ENCODE measurements at regions of chr15 and their contacts with region 1.

Region 1: GRCh38 chr15:29756358-29757267 is 65.7 kb downstream of the TJP1 start:
- DNase-seq: no peak
- ATAC-seq: no peak
- H3K4me3 ChIP-seq: no peak overlapping the region
- H3K4me3 Mint-ChIP-seq: no peak overlapping the region
- H3K27ac ChIP-seq: no peak overlapping the region
- H3K27ac Mint-ChIP-seq: no peak overlapping the region
- H3K4me1 ChIP-seq: no peaks in the 10 kb centered on the region
- H3K4me1 Mint-ChIP-seq: no peaks in the 10 kb centered on the region
- H3K27me3 ChIP-seq: no peaks in the 10 kb centered on the region
- H3K27me3 Mint-ChIP-seq: peaks cover 17% of the 10 kb centered on the region
- CTCF ChIP-seq: no peak

Region 2: GRCh38 chr15:29925227-29926082 is 168.8 kb after region 1 on chr15:
- CTCF ChIA-PET with region 1: no interaction called
- POLR2A ChIA-PET with region 1: no interaction called
- intact Hi-C with region 1: loop called in 1 of 2 experiments (anchors 5 kb)
- DNase-seq: peak in 4 of 9 experiments; percentile 12 to 42 (median 18)
- ATAC-seq: no peak
- H3K4me3 ChIP-seq: no peak overlapping the region
- H3K4me3 Mint-ChIP-seq: no peak overlapping the region
- H3K27ac ChIP-seq: no peak overlapping the region
- H3K27ac Mint-ChIP-seq: no peak overlapping the region
- H3K4me1 ChIP-seq: no peaks in the 10 kb centered on the region
- H3K4me1 Mint-ChIP-seq: no peaks in the 10 kb centered on the region
- H3K27me3 ChIP-seq: no peaks in the 10 kb centered on the region
- H3K27me3 Mint-ChIP-seq: peaks cover 34% of the 10 kb centered on the region
- CTCF ChIP-seq: no peak